ENCODE measurements at regions of chr1 and their contacts with region 1.

Region 1: DNA sequence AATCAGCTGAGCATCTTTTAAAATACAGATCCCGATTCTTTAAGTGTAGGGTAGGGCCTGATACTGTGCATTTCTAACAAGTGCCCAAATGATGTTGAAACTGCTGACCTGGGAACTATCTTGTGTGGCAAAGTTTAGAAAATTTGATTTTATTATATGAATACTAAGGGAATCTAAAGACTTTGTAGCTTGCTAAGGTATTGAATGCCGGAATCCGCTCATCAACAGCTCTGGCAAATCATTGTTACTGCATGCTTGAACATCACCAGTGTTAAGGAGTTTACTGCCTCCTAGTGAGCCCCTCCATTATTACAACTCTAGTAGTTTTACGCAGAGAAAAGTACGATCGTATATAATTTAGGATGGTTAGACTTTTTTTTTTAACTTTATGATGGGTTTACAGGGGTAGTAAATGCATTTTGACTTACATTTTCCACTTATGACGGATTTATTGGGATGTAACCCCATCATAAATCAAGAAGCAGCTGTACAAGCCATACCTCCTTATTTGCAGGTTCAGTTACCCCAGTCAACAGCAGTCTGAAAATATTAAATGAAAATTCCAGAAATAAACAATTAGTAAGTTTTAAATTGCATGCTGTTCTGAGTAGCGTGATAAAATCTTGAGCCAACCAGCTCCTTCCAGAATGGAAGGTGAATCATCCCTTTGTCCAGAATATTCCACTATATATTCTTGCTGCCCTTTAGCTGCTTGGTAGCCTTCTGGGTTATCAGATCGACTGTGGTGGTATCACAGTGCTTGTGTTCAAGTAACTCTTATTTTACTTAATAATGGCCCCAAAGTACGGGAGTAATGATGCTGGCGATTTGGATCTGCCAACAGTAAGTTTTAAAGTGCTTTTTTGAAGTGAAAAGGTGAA is 892 bp downstream of the TYW3 start:
- DNase-seq: peak; percentile 77
- ATAC-seq: peak; percentile 53
- H3K4me3 ChIP-seq: peak overlapping the region; percentile 88 to 97 (median 92)
- H3K27ac ChIP-seq: peak overlapping the region; percentile 98
- H3K4me1 ChIP-seq: peaks cover 49% of the 10 kb centered on the region
- H3K27me3 ChIP-seq: no peaks in the 10 kb centered on the region; a peak in 1 of 5 replicates
- CTCF ChIP-seq: peak; percentile 70
- EP300 ChIP-seq: no peak
- POLR2A ChIP-seq: no peak
- RAD21 ChIP-seq: peak; percentile 26; the same call in 1 of the 2 replicates

Region 2: DNA sequence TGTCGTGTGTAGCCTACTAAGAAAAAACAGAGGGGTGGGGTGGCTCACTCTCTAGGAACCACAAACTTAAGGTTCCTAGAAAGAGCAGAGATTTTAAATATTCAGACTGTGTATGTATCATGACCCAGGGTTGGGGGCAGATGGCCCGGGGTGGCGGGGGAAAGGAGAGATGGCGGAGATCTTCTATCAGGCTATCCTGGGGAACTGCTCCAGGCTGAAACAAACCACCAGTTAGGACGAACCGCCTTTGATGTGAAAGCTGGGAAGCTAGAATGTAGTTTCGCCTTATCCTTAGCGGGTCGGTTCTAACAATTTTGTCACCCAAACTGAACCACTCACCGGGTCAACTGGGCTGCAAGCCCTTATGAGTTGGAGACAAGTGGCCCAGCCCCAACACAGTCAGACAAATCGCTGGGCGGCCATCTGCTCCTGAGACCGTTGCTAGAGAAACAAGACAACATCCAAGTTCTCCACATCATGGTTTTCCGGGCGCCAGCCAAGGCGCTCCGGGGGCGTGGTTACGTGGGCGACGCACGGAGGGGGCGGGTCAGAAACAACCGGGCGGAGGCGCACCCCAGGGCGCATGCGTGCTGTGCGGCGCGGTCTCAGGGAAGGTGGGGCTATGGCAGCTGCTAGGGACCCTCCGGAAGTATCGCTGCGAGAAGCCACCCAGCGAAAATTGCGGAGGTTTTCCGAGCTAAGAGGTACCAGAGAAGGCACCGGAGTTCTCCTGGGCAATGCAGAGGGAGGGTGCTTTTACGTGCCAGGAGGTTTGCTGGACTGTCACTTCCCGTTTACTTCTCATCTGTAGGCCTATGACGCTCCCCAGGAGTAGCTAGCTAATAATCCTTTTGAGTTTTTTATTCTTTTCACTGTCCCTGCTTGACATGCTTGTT is 535.9 kb before region 1 on chr1 and contains the starts of genes FPGT and LRRIQ3:
- CTCF ChIA-PET with region 1: no interaction called
- POLR2A ChIA-PET with region 1: no interaction called
- in situ Hi-C with region 1: no loop called
- intact Hi-C with region 1: loop called (anchors 5 kb)
- DNase-seq: peak; percentile 88
- ATAC-seq: peak; percentile 97
- H3K4me3 ChIP-seq: peak within 1 kb of the TSS; percentile 55 to 85 (median 81)
- H3K27ac ChIP-seq: peak within 1 kb of the TSS; percentile 73
- H3K4me1 ChIP-seq: peaks cover 15% of the 10 kb centered on the region
- H3K27me3 ChIP-seq: no peaks in the 10 kb centered on the region
- CTCF ChIP-seq: no peak
- EP300 ChIP-seq: no peak
- POLR2A ChIP-seq: peak; percentile 66 to 75; a peak in 3 of 4 replicates
- RAD21 ChIP-seq: no peak
- total RNA-seq, gene FPGT: 9.8 and 16.2 TPM in 2 replicates
- total RNA-seq, gene LRRIQ3: 1.2 and 1.3 TPM in 2 replicates

Region 3: DNA sequence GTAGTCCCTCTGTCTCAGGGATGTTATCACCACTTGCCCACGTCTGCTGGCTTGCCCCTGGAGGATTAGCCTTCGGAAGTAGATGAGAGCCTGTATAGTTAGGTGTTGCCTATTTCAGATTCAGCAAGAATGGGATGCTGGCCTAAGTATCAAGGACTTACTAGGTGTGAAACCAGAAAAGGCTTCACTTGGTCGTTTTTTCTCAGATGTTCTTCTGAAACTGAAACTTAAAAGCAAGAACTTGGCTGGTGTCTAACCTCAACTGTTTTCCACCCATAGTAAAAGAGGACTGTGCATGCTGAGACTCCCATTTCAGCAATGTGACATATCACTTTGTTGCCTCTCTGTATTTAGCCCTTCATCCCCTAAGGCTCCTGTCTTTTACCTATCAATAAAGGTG is 154.4 kb before region 1 on chr1:
- CTCF ChIA-PET with region 1: no interaction called
- POLR2A ChIA-PET with region 1: no interaction called
- in situ Hi-C with region 1: no loop called
- intact Hi-C with region 1: no loop called
- DNase-seq: no peak
- ATAC-seq: no peak
- H3K4me3 ChIP-seq: no peak overlapping the region
- H3K27ac ChIP-seq: no peak overlapping the region
- H3K4me1 ChIP-seq: no peaks in the 10 kb centered on the region
- H3K27me3 ChIP-seq: no peaks in the 10 kb centered on the region
- CTCF ChIP-seq: no peak
- EP300 ChIP-seq: no peak
- POLR2A ChIP-seq: no peak
- RAD21 ChIP-seq: no peak

Region 4: DNA sequence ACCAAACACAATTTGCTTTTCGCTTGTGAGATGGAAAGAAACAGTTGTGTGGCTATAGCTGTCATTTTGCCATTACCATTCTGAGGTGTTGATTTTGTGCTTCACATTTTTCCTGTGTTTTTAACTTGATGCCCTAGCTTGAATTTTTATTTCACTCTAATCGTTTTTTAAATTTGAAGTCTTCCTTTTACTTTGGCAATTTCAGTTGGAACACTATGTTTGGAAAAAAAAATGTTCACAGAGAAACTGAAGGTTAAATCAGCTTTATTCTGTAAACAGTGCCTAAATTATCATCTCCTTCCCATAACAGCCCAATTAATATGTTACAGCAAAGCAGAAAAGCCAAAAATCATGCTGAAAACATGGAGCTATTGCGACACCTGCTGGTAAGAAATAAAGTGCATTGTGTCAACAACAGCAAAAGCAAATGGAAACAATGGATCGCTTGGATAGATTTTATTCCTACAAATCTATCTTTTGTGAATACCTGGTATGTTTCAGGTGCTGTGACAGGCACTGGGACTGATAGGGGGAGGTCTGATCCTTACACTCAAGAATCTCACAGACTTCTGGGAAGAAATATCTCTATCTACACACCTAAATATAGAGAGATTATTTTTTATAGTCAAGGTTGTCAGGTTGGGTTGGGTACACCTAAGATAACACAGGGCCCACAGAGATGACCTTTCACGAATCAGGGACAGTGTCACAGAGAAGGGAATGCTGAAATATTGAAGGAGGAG is 44.1 kb before region 1 on chr1:
- CTCF ChIA-PET with region 1: interaction called, 5 read pairs
- POLR2A ChIA-PET with region 1: interaction called, 4 read pairs
- in situ Hi-C with region 1: no loop called
- intact Hi-C with region 1: loop called (anchors 1 kb)
- DNase-seq: peak; percentile 53
- ATAC-seq: peak; percentile 85
- H3K4me3 ChIP-seq: no peak overlapping the region
- H3K27ac ChIP-seq: no peak overlapping the region
- H3K4me1 ChIP-seq: peaks cover 8% of the 10 kb centered on the region
- H3K27me3 ChIP-seq: no peaks in the 10 kb centered on the region
- CTCF ChIP-seq: peak; percentile 85
- EP300 ChIP-seq: no peak
- POLR2A ChIP-seq: no peak
- RAD21 ChIP-seq: peak; percentile 60

Region 5: DNA sequence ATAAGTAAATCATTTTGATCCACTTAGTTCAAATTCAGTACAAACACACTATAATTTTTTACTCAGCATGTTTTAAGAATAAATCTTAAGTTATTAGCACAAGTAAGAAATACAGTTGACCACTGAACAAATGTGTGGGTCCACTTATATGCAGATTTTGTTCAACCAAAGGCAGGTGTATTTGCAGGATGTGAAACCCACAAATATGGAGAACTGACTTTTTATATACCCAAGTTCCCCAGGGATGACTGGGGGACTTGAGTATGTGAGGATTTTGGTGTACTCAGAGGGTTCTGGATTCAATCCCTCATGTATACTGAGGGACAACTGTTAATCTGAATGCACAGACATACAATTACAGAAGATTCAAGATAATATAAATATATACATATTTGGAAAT is 34.5 kb before region 1 on chr1:
- CTCF ChIA-PET with region 1: no interaction called
- POLR2A ChIA-PET with region 1: interaction called, 10 read pairs
- in situ Hi-C with region 1: no loop called
- intact Hi-C with region 1: no loop called
- DNase-seq: no peak
- ATAC-seq: no peak
- H3K4me3 ChIP-seq: no peak overlapping the region
- H3K27ac ChIP-seq: no peak overlapping the region
- H3K4me1 ChIP-seq: no peaks in the 10 kb centered on the region
- H3K27me3 ChIP-seq: no peaks in the 10 kb centered on the region; a peak in 1 of 5 replicates
- CTCF ChIP-seq: no peak
- EP300 ChIP-seq: no peak
- POLR2A ChIP-seq: no peak
- RAD21 ChIP-seq: no peak

Region 6: GRCh38 chr1:74714429-74715235 is 19.2 kb before region 1 on chr1:
- CTCF ChIA-PET with region 1: no interaction called
- POLR2A ChIA-PET with region 1: interaction called, 11 read pairs
- in situ Hi-C with region 1: no loop called
- intact Hi-C with region 1: no loop called
- DNase-seq: no peak
- ATAC-seq: no peak
- H3K4me3 ChIP-seq: no peak overlapping the region
- H3K27ac ChIP-seq: no peak overlapping the region
- H3K4me1 ChIP-seq: no peaks in the 10 kb centered on the region
- H3K27me3 ChIP-seq: no peaks in the 10 kb centered on the region
- CTCF ChIP-seq: no peak
- EP300 ChIP-seq: no peak
- POLR2A ChIP-seq: no peak
- RAD21 ChIP-seq: no peak

Region 7: GRCh38 chr1:74748960-74749359 is 15.1 kb after region 1 on chr1:
- CTCF ChIA-PET with region 1: no interaction called
- POLR2A ChIA-PET with region 1: no interaction called
- in situ Hi-C with region 1: no loop called
- intact Hi-C with region 1: no loop called
- DNase-seq: peak; percentile 42
- ATAC-seq: no peak; the same call in 2 of the 3 replicates
- H3K4me3 ChIP-seq: no peak overlapping the region
- H3K27ac ChIP-seq: no peak overlapping the region
- H3K4me1 ChIP-seq: peaks cover 13% of the 10 kb centered on the region; the same call in 1 of the 2 replicates
- H3K27me3 ChIP-seq: no peaks in the 10 kb centered on the region
- CTCF ChIP-seq: no peak
- EP300 ChIP-seq: no peak
- POLR2A ChIP-seq: no peak
- RAD21 ChIP-seq: no peak